Right cardiac atrium (tissue), 5 donors: ENCODE measurements at regions of chr19 and their contacts with region 1.

Region 1: DNA sequence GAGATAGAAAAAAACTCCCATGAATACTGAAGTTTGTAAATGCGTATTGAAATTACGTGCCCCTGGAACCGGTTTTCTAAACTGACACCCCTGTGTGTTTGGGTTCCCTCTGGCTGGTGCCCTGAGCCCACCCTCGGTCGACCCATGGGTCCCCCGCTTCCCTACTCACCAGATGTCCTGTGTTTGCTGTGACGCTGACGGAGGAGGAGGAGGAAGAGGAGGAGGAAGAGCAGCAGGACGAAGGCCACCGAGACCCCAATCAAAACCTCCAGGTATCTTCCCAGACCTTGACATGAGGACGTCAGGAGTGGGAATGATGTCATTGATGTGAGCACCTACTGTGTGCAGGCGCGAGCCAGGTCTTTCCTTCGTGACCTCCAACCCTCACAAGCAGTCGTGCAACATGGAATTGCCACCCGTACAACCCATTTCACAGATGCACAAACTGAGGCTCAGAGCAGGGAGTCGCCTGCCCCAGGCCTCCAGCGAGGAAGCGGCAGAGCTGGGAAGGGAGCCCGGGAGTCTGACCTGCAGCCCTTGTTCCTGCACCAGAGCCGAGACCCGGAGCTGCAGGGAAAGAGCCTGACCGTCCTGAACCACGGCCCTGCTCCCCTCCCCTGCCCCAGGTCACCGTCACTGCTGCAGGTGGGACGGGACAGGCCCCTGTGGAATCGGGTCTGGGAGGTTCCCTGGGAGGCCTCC is 3.7 kb downstream of the LILRB3 start:
- DNase-seq: no peak
- ATAC-seq: no peak
- H3K4me3 ChIP-seq: no peak overlapping the region
- H3K27ac ChIP-seq: no peak overlapping the region
- H3K4me1 ChIP-seq: no peaks in the 10 kb centered on the region
- H3K27me3 ChIP-seq: no peaks in the 10 kb centered on the region

Region 2: DNA sequence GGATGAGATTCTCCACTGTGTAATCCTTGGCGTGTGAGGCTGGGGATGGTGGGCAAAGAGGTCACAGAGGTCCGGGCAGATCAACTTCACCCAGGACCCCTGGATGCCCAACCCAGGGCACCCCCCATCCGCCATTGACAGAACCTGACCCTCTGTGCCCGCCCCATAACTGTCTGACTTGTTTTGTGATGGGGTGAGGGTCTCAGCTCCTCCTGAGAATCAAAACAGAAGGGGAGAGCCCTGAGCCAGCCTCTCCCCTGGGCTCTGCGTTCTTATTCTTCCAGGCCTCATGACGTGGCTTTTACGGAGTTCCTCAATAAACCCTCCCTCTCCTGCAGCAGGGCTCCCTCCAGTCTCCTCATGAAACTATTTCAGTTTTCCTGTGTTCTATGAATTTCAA is 19.9 kb after region 1 on chr19:
- intact Hi-C with region 1: loop called in 2 of 4 experiments (anchors 2 kb)
- DNase-seq: no peak
- ATAC-seq: no peak
- H3K4me3 ChIP-seq: no peak overlapping the region
- H3K27ac ChIP-seq: no peak overlapping the region
- H3K4me1 ChIP-seq: no peaks in the 10 kb centered on the region
- H3K27me3 ChIP-seq: no peaks in the 10 kb centered on the region

Region 3: GRCh38 chr19:54245936-54246335 is 26.8 kb after region 1 on chr19:
- intact Hi-C with region 1: loop called in 1 of 4 experiments (anchors 2 kb)
- DNase-seq: no peak
- ATAC-seq: no peak
- H3K4me3 ChIP-seq: no peak overlapping the region
- H3K27ac ChIP-seq: no peak overlapping the region
- H3K4me1 ChIP-seq: no peaks in the 10 kb centered on the region
- H3K27me3 ChIP-seq: no peaks in the 10 kb centered on the region